ENCODE measurements at regions of chr1 and their contacts with region 1.

Region 1: DNA sequence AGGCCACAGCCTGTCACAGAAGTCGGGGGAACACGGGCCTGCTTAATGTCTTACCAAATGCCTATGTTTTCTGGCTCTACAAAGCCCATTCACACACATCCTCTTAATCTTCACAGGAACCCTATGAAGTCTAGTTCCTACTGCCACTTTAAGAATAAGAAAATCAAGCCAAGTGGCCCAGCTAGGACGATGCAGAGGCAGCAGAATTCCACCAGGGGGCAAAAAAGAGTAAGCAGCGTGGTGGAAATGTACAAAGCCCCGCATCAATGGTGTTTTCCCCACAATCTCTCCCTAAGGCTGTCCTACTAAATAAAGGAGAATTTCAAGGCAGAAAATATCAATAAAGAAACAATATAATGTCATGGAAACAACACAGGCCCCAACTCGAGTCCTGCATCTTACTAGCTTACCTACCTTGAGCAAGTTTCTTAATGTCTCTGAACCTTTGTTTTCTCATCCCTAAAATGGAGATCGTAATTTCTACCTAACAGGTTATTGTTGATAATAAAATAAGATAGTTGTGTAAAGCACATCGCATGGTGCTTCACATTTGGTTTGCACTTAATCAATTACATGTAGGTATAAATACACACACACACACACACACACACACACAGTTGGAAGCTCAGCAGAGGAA is 21.4 kb downstream of the SEC16B start:
- DNase-seq: no peak
- H3K4me3 Mint-ChIP-seq: no peak overlapping the region
- H3K27ac Mint-ChIP-seq: no peak overlapping the region
- H3K4me1 Mint-ChIP-seq: no peaks in the 10 kb centered on the region
- H3K27me3 Mint-ChIP-seq: no peaks in the 10 kb centered on the region

Region 2: DNA sequence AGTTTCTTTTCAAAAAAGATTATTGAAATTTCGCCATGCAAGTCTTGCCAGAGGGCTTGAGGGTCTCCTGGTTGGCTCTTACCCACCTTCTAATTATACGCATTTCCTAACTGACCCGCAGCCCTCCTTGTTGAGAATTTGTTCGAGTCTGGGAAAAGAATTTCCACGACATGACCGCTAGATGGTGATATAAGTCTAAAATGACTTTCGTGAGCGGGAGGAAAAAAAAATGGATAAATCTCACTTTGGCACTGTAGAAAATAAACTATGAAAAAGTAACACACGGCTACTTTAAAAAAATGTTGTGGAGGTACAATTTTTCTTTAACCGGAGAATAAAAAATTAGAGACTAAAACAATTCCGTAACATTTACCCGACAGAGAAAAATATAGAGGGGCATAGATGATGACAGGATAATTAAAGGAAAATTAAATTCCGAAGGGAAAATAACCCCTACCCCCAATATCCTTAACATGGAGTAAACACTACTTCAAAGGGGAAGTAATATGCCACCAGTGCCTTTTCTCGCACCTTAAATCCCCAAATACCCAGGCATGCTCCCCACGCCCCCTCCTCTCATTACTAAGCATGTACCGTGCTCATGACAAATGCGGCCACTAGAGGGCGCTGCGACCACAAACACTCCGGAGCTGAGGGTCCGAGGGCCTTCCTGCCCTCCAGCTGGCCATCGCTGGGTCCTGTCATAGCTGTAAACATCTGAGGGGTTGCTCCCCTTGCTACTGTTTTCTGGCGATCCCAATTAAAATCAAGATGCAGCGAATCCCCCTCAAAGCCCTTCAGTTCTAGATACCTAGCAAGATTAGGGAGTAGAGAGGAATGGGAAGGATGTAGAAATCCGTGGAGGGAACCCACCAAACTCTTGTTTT is 1050.9 kb before region 1 on chr1:
- intact Hi-C with region 1: loop called (anchors 2 kb)
- DNase-seq: peak; percentile 2
- H3K4me3 Mint-ChIP-seq: no peak overlapping the region
- H3K27ac Mint-ChIP-seq: no peak overlapping the region
- H3K4me1 Mint-ChIP-seq: peaks cover 8% of the 10 kb centered on the region
- H3K27me3 Mint-ChIP-seq: no peaks in the 10 kb centered on the region

Region 3: GRCh38 chr1:177256153-177257075 is 692.0 kb before region 1 on chr1:
- intact Hi-C with region 1: loop called (anchors 10 kb)
- DNase-seq: no peak
- H3K4me3 Mint-ChIP-seq: no peak overlapping the region
- H3K27ac Mint-ChIP-seq: no peak overlapping the region
- H3K4me1 Mint-ChIP-seq: no peaks in the 10 kb centered on the region
- H3K27me3 Mint-ChIP-seq: no peaks in the 10 kb centered on the region

Region 4: DNA sequence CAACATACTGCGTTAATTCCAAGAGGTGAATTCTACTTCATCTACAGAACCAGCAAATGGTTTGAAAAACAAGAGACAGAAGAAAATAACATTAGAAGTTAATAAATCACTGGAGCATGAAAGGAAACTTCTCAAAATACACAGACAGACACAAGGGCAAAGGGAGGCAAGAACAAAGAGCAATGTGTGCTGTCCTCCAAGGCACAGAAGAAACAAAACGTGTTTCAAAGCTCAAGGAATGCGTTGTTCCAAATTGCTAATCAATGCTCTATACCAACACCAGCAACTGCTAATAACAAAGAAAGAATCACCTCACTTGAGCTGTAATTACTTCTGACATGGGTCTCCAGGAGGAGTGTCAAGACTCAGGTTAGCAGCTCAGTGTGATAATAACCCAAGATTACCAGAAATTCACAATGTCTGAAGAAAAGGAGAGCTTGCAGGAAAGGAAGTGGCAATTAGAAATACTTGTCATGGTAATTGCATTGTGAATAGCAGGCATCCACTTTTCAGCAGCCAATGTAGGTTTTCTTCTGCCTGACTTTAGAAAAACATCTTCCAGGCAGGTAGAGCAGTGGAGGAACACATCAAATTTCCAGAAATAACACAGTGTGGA is 154.0 kb before region 1 on chr1:
- intact Hi-C with region 1: no loop called
- DNase-seq: no peak
- H3K4me3 Mint-ChIP-seq: no peak overlapping the region
- H3K27ac Mint-ChIP-seq: no peak overlapping the region
- H3K4me1 Mint-ChIP-seq: no peaks in the 10 kb centered on the region
- H3K27me3 Mint-ChIP-seq: no peaks in the 10 kb centered on the region

Measured in activated T-helper 1 cell treated with anti-CD3 and anti-CD28 coated beads, Interleukin-12 subunit alpha, Interleukin-12 subunit beta, Interleukin-2, Interleukin-4 antibody, amounts not matched to agents 30 ng/mL and 10 ng/mL and 1 ng/mL, durations not matched to agents 14 hours and 24 hours and 36 hours (primary cell).